Natural killer cell (primary cell): ENCODE measurements at regions of chr3 and their contacts with region 1.

Region 1: GRCh38 chr3:184561061-184561912 is at the start of gene EPHB3:
- DNase-seq: peak; percentile 91 to 93
- ATAC-seq: peak; percentile 85 to 93 (median 88)
- H3K4me3 ChIP-seq: peak within 1 kb of the TSS; percentile 35
- H3K4me3 Mint-ChIP-seq: peak within 1 kb of the TSS; percentile 82
- H3K27ac ChIP-seq: no peak within 1 kb of the TSS
- H3K27ac Mint-ChIP-seq: peak within 1 kb of the TSS; percentile 55 to 85
- H3K4me1 ChIP-seq: peaks cover 17% of the 10 kb centered on the region
- H3K4me1 Mint-ChIP-seq: peaks cover 15 to 16% of the 10 kb centered on the region in 2 donors
- H3K27me3 ChIP-seq: peaks cover 35% of the 10 kb centered on the region
- H3K27me3 Mint-ChIP-seq: peaks cover 53 to 55% of the 10 kb centered on the region in 2 donors
- CTCF ChIP-seq: peak; percentile 99
- total RNA-seq, gene EPHB3: not detected

Region 2: DNA sequence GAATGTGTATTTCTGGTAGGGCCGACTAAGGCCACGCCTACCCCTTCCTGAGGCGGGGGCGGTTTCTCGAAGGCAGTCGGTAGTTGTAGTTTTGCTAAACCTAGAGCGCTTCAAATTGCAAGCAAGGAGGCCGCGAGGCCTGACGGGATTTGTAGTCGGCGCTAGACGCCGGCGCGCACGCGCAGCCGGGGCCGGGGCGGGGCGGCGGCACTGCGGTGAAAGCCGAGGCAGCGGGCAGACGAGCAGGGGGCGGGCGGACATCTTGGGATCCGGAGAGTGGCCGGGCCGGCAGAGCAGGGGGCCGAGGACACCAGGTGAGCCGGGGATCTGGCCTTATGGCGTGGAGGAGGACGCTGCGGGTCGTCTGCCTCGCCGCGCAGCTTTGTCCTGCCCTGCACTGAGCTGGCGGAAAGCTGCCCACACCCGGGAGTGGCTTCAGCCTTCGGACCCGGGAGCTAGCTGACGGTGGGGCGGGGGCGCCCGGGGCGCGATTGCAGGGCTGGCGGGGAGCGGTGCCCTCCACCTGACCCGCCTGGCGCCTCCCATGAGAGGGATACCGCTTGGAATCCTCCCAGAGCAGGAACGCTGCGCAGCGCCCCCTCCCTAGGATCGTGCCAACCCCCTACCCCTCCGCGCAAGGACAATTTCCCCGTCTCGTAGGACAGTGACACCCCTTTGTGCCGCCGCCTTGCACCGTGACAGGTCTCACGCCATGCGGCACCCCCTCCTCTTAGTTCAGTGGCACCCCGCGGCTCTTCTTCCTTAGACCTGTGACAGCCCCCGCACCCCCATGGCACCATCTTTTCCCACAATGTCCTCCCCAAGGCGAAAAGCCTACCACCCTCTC is 386.4 kb before region 1 on chr3 and contains the start of gene AP2M1:
- intact Hi-C with region 1: loop called (anchors 1 kb)
- DNase-seq: peak; percentile 98
- ATAC-seq: peak; percentile 97 to 100 (median 97)
- H3K4me3 ChIP-seq: peak within 1 kb of the TSS; percentile 96
- H3K4me3 Mint-ChIP-seq: peak within 1 kb of the TSS; percentile 93
- H3K27ac ChIP-seq: peak within 1 kb of the TSS; percentile 71
- H3K27ac Mint-ChIP-seq: peak within 1 kb of the TSS; percentile 71 to 92
- H3K4me1 ChIP-seq: peaks cover 30% of the 10 kb centered on the region
- H3K4me1 Mint-ChIP-seq: peaks cover 25 to 40% of the 10 kb centered on the region in 2 donors
- H3K27me3 ChIP-seq: no peaks in the 10 kb centered on the region
- H3K27me3 Mint-ChIP-seq: no peaks in the 10 kb centered on the region
- CTCF ChIP-seq: no peak
- total RNA-seq, gene AP2M1: 157 to 188 (median 168) TPM

Region 3: DNA sequence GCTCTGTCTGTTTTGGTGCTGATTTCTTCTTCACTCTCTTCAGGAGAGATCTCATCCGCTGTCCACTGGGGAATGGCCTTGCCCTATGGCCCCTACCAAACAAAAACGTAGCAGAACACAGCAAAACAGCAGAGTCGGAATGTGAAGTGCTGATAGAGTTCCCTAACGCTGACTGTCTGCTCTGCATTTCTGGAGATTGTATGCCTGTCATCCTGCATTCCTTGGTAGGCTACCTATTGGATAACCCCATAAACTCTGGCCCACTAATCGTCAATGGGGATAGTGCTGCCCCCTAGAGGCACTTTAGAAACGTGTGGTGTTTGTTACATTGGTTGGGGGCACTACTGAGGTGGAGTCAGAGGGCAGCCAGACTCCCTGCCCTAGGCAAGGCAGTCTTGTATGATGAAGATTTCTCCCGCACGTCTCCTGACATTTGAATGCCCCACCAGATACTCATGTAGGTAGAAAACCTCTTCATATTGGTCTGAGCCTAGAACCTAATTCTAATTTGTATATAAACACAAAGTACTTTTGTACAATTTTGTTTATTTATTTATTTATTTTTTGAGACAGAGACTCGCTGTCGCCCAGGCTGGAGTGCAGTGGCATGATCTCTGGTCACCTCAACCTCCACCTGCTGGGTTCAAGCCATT is 166.2 kb after region 1 on chr3:
- intact Hi-C with region 1: loop called (anchors 1 kb)
- DNase-seq: peak in 1 of 2 donors; percentile 79
- ATAC-seq: peak; percentile 65 to 81 (median 80)
- H3K4me3 ChIP-seq: no peak overlapping the region
- H3K4me3 Mint-ChIP-seq: no peak overlapping the region
- H3K27ac ChIP-seq: no peak overlapping the region
- H3K27ac Mint-ChIP-seq: no peak overlapping the region
- H3K4me1 ChIP-seq: no peaks in the 10 kb centered on the region
- H3K4me1 Mint-ChIP-seq: no peaks in the 10 kb centered on the region
- H3K27me3 ChIP-seq: no peaks in the 10 kb centered on the region
- H3K27me3 Mint-ChIP-seq: peaks cover 25 to 31% of the 10 kb centered on the region in 2 donors
- CTCF ChIP-seq: peak; percentile 70

Region 4: DNA sequence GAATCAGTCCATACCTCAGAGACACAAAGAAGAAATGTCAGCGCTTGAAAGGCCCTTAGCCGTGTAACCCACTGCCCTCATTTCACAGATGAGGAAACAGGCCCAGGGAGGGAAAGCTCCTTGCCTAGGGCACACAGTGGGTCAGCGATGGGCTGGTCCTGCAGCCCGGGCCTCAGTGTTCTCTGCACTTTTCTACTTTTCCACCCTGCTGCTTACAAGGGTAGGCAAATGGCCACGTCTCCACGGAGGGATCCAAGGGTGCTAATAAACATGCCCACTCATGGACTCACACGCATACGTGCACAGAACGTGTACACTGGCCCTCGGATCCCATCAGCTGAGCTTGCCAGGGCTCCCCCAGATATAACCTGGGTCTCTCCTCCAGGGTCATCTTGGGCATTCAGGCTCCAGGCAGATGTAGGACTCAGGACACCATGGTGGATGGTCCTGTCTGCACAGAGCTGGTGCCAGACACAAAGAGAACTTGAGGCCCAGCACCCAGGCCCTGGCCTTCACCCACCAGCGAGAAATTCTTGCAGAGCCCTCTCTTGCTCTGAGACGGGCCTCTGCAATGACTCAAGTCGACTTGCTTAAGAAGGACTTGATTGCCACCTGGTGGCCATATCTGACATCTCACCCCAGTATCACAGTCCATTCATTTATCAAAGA is 216.2 kb after region 1 on chr3:
- intact Hi-C with region 1: loop called (anchors 1 kb)
- DNase-seq: peak; percentile 67 to 92
- ATAC-seq: peak; percentile 87 to 100 (median 100)
- H3K4me3 ChIP-seq: no peak overlapping the region
- H3K4me3 Mint-ChIP-seq: no peak overlapping the region
- H3K27ac ChIP-seq: no peak overlapping the region
- H3K27ac Mint-ChIP-seq: no peak overlapping the region
- H3K4me1 ChIP-seq: no peaks in the 10 kb centered on the region
- H3K4me1 Mint-ChIP-seq: no peaks in the 10 kb centered on the region
- H3K27me3 ChIP-seq: peaks cover 4% of the 10 kb centered on the region
- H3K27me3 Mint-ChIP-seq: peaks cover 31 to 40% of the 10 kb centered on the region in 2 donors
- CTCF ChIP-seq: peak; percentile 88